ENCODE measurements at regions of chr4 and their contacts with region 1.

Region 1: GRCh38 chr4:57168982-57169381 is 58.8 kb upstream of the IGFBP7 start:
- DNase-seq: no peak
- ATAC-seq: no peak
- H3K4me3 ChIP-seq: no peak overlapping the region
- H3K27ac ChIP-seq: no peak overlapping the region
- H3K4me1 ChIP-seq: no peaks in the 10 kb centered on the region
- H3K27me3 ChIP-seq: no peaks in the 10 kb centered on the region

Region 2: GRCh38 chr4:56655209-56655626 is 513.8 kb before region 1 on chr4:
- intact Hi-C with region 1: no loop called
- DNase-seq: peak; percentile 15 to 72 (median 63)
- ATAC-seq: peak; percentile 63 to 70
- H3K4me3 ChIP-seq: peak overlapping the region; percentile 61
- H3K27ac ChIP-seq: no peak overlapping the region
- H3K4me1 ChIP-seq: no peaks in the 10 kb centered on the region
- H3K27me3 ChIP-seq: no peaks in the 10 kb centered on the region

Region 3: DNA sequence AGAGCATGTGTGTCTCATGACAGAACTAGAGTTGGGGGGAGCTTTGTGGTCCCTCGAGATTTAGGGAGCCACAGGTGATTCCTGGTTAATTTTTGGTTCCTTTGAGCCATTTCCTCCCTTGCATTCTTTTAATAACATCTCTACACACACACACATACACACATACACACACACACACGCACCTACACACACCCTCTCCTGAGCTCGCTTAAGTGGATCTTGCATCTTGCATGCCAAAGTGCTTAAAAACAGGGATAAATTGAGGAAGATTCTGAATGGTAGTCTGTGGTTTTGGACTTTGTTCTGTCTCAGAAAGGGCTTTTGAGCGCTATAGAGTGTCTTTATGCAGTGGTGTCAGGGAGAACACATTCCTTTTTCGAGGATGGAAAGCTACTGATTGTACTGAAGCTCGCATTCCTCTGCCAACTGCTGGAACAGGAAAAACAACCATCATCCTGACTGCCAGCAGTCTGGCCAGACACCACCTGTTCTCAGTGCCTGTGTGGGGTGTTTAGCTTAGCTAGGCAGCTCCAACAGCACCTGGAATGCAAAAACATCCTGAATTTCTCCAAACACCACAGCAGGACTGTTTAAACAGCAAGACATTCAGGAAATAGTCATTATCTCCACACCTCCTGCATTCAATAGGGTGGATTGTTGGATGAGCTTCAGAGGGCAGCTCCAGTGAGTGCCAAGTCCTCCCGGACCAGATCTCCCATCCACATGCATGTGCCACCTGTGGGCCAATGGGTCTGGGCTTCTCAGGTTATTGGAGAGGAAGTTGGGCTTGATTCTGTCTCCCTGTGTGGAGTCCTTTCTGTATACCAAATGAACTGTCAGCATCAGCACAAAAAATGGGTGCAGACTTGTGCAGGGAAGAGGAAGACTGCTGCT is 36.9 kb before region 1 on chr4:
- intact Hi-C with region 1: no loop called
- DNase-seq: no peak
- ATAC-seq: peak in 1 of 2 donors; percentile 41
- H3K4me3 ChIP-seq: no peak overlapping the region
- H3K27ac ChIP-seq: no peak overlapping the region
- H3K4me1 ChIP-seq: no peaks in the 10 kb centered on the region
- H3K27me3 ChIP-seq: no peaks in the 10 kb centered on the region

Region 4: GRCh38 chr4:57249083-57249482 is 80.1 kb after region 1 on chr4:
- intact Hi-C with region 1: no loop called
- DNase-seq: no peak
- ATAC-seq: no peak
- H3K4me3 ChIP-seq: no peak overlapping the region
- H3K27ac ChIP-seq: no peak overlapping the region
- H3K4me1 ChIP-seq: no peaks in the 10 kb centered on the region
- H3K27me3 ChIP-seq: no peaks in the 10 kb centered on the region

Region 5: GRCh38 chr4:57424232-57424897 is 255.4 kb after region 1 on chr4:
- intact Hi-C with region 1: loop called in 2 of 4 experiments (anchors 5 to 10 kb)
- DNase-seq: peak in 2 of 3 donors; percentile 54 to 68
- ATAC-seq: peak; percentile 80 to 87
- H3K4me3 ChIP-seq: no peak overlapping the region
- H3K27ac ChIP-seq: no peak overlapping the region
- H3K4me1 ChIP-seq: no peaks in the 10 kb centered on the region
- H3K27me3 ChIP-seq: peaks cover 4% of the 10 kb centered on the region